ENCODE measurements at regions of chr3 and their contacts with region 1.

Region 1: GRCh38 chr3:188673646-188674186 is 498.1 kb upstream of the TPRG1 start:
- DNase-seq: peak; percentile 24 to 93
- H3K4me3 ChIP-seq: no peak overlapping the region
- H3K27ac ChIP-seq: peak overlapping the region; percentile 62
- H3K4me1 ChIP-seq: peaks cover 17% of the 10 kb centered on the region
- H3K27me3 ChIP-seq: no peaks in the 10 kb centered on the region
- CTCF ChIP-seq: no peak

Region 2: GRCh38 chr3:188185717-188186251 is 487.9 kb before region 1 on chr3:
- CTCF ChIA-PET with region 1: no interaction called
- POLR2A ChIA-PET with region 1: no interaction called
- intact Hi-C with region 1: no loop called
- DNase-seq: peak; percentile 37 to 92
- H3K4me3 ChIP-seq: no peak overlapping the region
- H3K27ac ChIP-seq: peak overlapping the region; percentile 55
- H3K4me1 ChIP-seq: peaks cover 48% of the 10 kb centered on the region
- H3K27me3 ChIP-seq: no peaks in the 10 kb centered on the region
- CTCF ChIP-seq: no peak

Region 3: GRCh38 chr3:188230962-188231361 is 442.8 kb before region 1 on chr3:
- CTCF ChIA-PET with region 1: no interaction called
- POLR2A ChIA-PET with region 1: no interaction called
- intact Hi-C with region 1: no loop called
- DNase-seq: peak in 1 of 2 experiments; percentile 56
- H3K4me3 ChIP-seq: no peak overlapping the region
- H3K27ac ChIP-seq: no peak overlapping the region
- H3K4me1 ChIP-seq: no peaks in the 10 kb centered on the region
- H3K27me3 ChIP-seq: no peaks in the 10 kb centered on the region
- CTCF ChIP-seq: no peak

Region 4: GRCh38 chr3:188294823-188295487 is 378.8 kb before region 1 on chr3:
- CTCF ChIA-PET with region 1: no interaction called
- POLR2A ChIA-PET with region 1: no interaction called
- intact Hi-C with region 1: loop called (anchors 10 kb)
- DNase-seq: peak; percentile 63 to 99
- H3K4me3 ChIP-seq: peak overlapping the region; percentile 8; the same call in 1 of the 2 replicates
- H3K27ac ChIP-seq: peak overlapping the region; percentile 77
- H3K4me1 ChIP-seq: peaks cover 55% of the 10 kb centered on the region
- H3K27me3 ChIP-seq: no peaks in the 10 kb centered on the region
- CTCF ChIP-seq: no peak

Region 5: GRCh38 chr3:188362405-188362831 is 311.3 kb before region 1 on chr3:
- CTCF ChIA-PET with region 1: no interaction called
- POLR2A ChIA-PET with region 1: no interaction called
- intact Hi-C with region 1: loop called (anchors 10 kb)
- DNase-seq: peak; percentile 41 to 87
- H3K4me3 ChIP-seq: no peak overlapping the region
- H3K27ac ChIP-seq: peak overlapping the region; percentile 17; the same call in 1 of the 2 replicates
- H3K4me1 ChIP-seq: peaks cover 9% of the 10 kb centered on the region
- H3K27me3 ChIP-seq: no peaks in the 10 kb centered on the region
- CTCF ChIP-seq: 0 out of 2 replicates have a peak, but pooled peaks have one; percentile 38

Region 6: DNA sequence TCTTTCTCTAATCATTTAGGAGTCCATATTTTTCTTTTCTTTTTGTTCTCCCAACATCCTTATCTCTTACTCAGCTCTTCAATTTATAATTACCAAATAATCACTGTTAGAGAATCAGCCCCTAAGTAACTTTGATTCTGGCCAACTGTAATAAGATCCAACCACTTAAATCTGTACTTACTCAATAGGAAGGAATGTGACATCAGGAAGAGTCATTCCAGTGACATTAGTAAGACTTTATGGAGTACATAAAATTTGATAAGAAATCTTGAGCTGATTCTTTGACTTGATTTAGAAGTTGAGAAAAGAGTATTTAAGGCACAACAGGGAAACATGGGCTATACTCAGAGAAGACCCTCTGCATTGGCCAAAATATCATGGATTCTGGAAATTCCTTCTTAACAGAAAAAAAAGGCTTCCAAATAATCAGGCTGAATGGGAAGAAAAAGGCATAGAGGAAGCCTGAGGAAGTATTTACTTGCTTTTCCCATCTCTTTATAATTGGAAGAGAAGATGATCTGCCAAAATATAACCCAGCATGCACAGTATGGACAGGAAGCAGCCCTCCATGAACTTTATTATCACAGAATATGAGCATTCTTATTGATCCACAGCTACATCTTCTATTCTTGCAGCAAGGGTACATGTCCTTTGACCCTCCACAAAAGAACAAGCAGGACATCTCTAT is 208.4 kb after region 1 on chr3:
- CTCF ChIA-PET with region 1: no interaction called
- POLR2A ChIA-PET with region 1: no interaction called
- intact Hi-C with region 1: loop called (anchors 5 kb)
- DNase-seq: peak in 1 of 2 experiments; percentile 96
- H3K4me3 ChIP-seq: no peak overlapping the region
- H3K27ac ChIP-seq: peak overlapping the region; percentile 57
- H3K4me1 ChIP-seq: peaks cover 25% of the 10 kb centered on the region
- H3K27me3 ChIP-seq: no peaks in the 10 kb centered on the region
- CTCF ChIP-seq: no peak

Region 7: DNA sequence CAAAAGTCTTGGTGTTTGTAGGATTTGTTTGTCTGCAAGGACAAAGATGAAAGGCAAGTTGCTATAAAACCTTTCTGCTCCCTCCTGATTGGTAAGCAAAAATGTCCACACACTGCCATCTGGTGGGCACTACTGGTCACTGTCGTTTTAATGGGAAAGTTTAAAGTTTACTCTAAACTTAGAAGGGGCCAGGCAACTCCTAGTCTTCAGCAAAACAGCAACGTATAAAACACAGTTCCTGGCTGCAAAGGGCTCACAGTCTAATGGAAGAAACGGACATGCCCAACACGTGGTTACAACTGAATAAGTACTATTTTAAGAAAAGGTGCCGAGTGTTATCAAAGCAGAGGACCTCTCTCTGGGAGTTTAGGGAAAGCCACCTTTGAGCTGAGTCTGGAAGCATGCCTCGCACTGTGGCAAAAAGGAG is 474.4 kb after region 1 on chr3:
- CTCF ChIA-PET with region 1: no interaction called
- POLR2A ChIA-PET with region 1: no interaction called
- intact Hi-C with region 1: loop called (anchors 10 kb)
- DNase-seq: peak; percentile 59
- H3K4me3 ChIP-seq: no peak overlapping the region
- H3K27ac ChIP-seq: no peak overlapping the region
- H3K4me1 ChIP-seq: peaks cover 7% of the 10 kb centered on the region
- H3K27me3 ChIP-seq: no peaks in the 10 kb centered on the region
- CTCF ChIP-seq: peak; percentile 97